SK-N-SH (cell line): ENCODE measurements at regions of chr10 and their contacts with region 1.

Region 1: GRCh38 chr10:132654702-132655661 is 117.4 kb downstream of the INPP5A start:
- DNase-seq: peak; percentile 95
- H3K4me3 ChIP-seq: peak overlapping the region in 1 of 2 experiments; percentile 53; a peak in 1 of 4 replicates
- H3K27ac ChIP-seq: no peak overlapping the region
- H3K4me1 ChIP-seq: peaks cover 0 to 31% of the 10 kb centered on the region in 2 experiments; a peak in 1 of 4 replicates
- H3K27me3 ChIP-seq: no peaks in the 10 kb centered on the region
- CTCF ChIP-seq: peak; percentile 97
- EP300 ChIP-seq: no peak
- RAD21 ChIP-seq: peak; percentile 94

Region 2: GRCh38 chr10:132434405-132435005 is 220.5 kb before region 1 on chr10:
- CTCF ChIA-PET with region 1: no interaction called
- POLR2A ChIA-PET with region 1: no interaction called
- DNase-seq: peak; percentile 39
- H3K4me3 ChIP-seq: no peak overlapping the region
- H3K27ac ChIP-seq: no peak overlapping the region
- H3K4me1 ChIP-seq: peaks cover 0 to 16% of the 10 kb centered on the region in 2 experiments; a peak in 1 of 4 replicates
- H3K27me3 ChIP-seq: no peaks in the 10 kb centered on the region
- CTCF ChIP-seq: no peak
- EP300 ChIP-seq: no peak
- RAD21 ChIP-seq: no peak

Region 3: DNA sequence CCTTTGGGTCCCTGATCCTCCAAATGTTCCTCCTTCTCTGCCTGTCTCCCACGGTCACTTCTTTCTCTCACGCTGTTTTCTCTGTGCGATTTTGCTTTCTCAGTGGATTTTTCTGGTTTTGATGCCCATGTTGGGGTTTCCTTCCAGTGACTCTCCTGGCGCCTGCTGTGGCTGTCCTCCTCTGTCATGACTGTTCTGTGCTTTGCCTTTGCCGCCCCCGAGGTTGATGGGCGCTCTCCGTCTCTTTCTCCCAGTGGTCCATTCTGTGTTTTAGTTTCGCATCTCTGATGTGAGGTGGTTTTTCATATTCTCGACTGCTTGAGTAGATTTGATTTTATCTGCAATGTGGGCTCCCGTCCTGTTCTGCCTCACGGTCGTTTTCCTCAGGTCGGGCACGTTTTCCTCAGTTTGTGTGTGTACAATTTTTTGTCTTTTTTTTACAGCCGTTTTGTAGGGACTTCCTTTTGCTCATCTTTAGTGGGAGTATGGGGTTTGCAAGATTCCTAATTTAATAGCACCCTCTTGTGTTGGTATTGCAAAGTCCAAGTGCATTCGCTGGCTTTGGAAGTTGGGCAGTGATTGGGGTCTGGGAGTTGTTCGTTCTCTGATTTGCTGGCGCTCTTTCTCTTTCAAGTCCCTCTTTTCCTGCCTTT is 17.4 kb before region 1 on chr10:
- CTCF ChIA-PET with region 1: interaction called, 19 read pairs
- POLR2A ChIA-PET with region 1: no interaction called
- DNase-seq: peak; percentile 89
- H3K4me3 ChIP-seq: peak overlapping the region in 1 of 2 experiments; percentile 18; a peak in 2 of 4 replicates
- H3K27ac ChIP-seq: no peak overlapping the region
- H3K4me1 ChIP-seq: peaks cover 0 to 7% of the 10 kb centered on the region in 2 experiments; a peak in 1 of 4 replicates
- H3K27me3 ChIP-seq: no peaks in the 10 kb centered on the region
- CTCF ChIP-seq: peak; percentile 83
- EP300 ChIP-seq: no peak
- RAD21 ChIP-seq: peak; percentile 97

Region 4: GRCh38 chr10:132665946-132666704 is 11.1 kb after region 1 on chr10:
- CTCF ChIA-PET with region 1: interaction called, 28 read pairs
- POLR2A ChIA-PET with region 1: no interaction called
- DNase-seq: no peak
- H3K4me3 ChIP-seq: peak overlapping the region in 1 of 2 experiments; percentile 5; a peak in 1 of 4 replicates
- H3K27ac ChIP-seq: peak overlapping the region; percentile 67 to 81; a peak in 3 of 4 replicates
- H3K4me1 ChIP-seq: peaks cover 20 to 22% of the 10 kb centered on the region in 2 experiments
- H3K27me3 ChIP-seq: no peaks in the 10 kb centered on the region
- CTCF ChIP-seq: no peak
- EP300 ChIP-seq: peak in 1 of 2 experiments; percentile 15; a peak in 1 of 4 replicates
- RAD21 ChIP-seq: no peak

Region 5: DNA sequence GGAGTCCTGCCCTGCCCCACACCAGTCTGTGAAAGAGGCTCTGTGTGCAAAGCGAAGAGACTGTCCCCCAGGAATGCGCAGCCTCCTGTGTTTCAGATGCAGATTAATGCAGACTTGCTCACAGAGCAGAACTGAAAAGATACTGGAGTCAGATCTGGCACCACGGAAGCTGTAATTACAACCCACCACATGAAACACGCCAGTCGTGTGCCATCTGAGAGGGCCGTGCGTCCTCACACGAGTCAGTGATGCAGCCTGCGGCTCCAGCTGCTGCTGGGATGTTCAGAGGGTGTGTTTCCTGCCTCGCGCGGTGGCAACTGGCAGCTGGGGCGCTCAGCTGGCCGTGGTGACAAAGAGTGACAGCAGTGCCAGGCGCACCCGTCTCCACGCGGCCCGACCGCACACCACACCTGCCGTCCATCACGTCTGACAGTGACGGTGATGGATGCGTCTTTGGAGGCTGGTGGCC is 81.0 kb after region 1 on chr10:
- CTCF ChIA-PET with region 1: interaction called, 42 read pairs
- POLR2A ChIA-PET with region 1: no interaction called
- DNase-seq: peak; percentile 63
- H3K4me3 ChIP-seq: no peak overlapping the region
- H3K27ac ChIP-seq: peak overlapping the region in 1 of 2 experiments; percentile 70; a peak in 2 of 4 replicates
- H3K4me1 ChIP-seq: peaks cover 0 to 30% of the 10 kb centered on the region in 2 experiments; a peak in 1 of 4 replicates
- H3K27me3 ChIP-seq: no peaks in the 10 kb centered on the region
- CTCF ChIP-seq: no peak
- EP300 ChIP-seq: no peak
- RAD21 ChIP-seq: no peak

Region 6: GRCh38 chr10:132793871-132794849 is 139.2 kb after region 1 on chr10:
- CTCF ChIA-PET with region 1: interaction called, 42 read pairs
- POLR2A ChIA-PET with region 1: no interaction called
- DNase-seq: peak; percentile 75
- H3K4me3 ChIP-seq: 0 out of 4 replicates have a peak overlapping the region, but pooled peaks of 1 of the 2 experiments have one; percentile 9
- H3K27ac ChIP-seq: no peak overlapping the region
- H3K4me1 ChIP-seq: peaks cover 0 to 16% of the 10 kb centered on the region in 2 experiments; a peak in 1 of 4 replicates
- H3K27me3 ChIP-seq: peaks cover 31% of the 10 kb centered on the region
- CTCF ChIP-seq: peak; percentile 43
- EP300 ChIP-seq: no peak
- RAD21 ChIP-seq: no peak; the same call in 1 of the 2 replicates

Region 7: DNA sequence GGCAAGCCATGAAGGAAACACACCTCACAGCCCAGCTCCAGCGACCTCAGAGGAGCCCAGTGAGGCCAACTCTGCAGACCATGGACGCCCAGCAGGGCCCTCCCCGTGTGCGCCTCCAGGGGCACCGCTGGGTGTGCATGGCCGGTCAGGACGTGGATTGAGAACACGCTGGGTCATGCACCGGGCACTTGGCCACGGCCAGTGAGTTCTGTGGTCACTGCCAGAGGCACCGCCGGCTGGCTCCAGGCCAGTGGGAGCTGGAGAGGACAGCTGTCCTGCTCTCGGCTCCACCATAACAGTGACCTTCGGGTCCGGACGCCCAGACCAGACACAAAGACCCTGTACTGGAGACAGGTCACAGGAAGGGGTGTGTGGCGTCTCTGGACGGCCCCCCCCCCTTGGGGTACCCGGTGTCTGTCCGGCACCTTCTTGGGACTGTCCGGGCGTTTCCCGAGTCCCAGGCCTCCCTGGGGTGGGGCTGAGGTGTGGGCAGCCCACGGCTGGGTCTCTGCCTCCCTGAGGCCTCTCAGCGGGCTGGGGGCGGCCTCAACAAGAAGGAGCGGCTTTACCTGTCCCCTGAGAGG is 181.4 kb after region 1 on chr10:
- CTCF ChIA-PET with region 1: interaction called, 26 read pairs
- POLR2A ChIA-PET with region 1: no interaction called
- DNase-seq: peak; percentile 74
- H3K4me3 ChIP-seq: no peak overlapping the region; a peak in 1 of 4 replicates
- H3K27ac ChIP-seq: no peak overlapping the region
- H3K4me1 ChIP-seq: peaks cover 0 to 11% of the 10 kb centered on the region in 2 experiments; a peak in 1 of 4 replicates
- H3K27me3 ChIP-seq: no peaks in the 10 kb centered on the region; the same call in 1 of the 2 replicates
- CTCF ChIP-seq: no peak
- EP300 ChIP-seq: no peak
- RAD21 ChIP-seq: no peak

Region 8: GRCh38 chr10:132904181-132904819 is 249.3 kb after region 1 on chr10:
- CTCF ChIA-PET with region 1: interaction called, 19 read pairs
- POLR2A ChIA-PET with region 1: no interaction called
- DNase-seq: peak; percentile 90
- H3K4me3 ChIP-seq: no peak overlapping the region
- H3K27ac ChIP-seq: no peak overlapping the region
- H3K4me1 ChIP-seq: no peaks in the 10 kb centered on the region
- H3K27me3 ChIP-seq: no peaks in the 10 kb centered on the region; the same call in 1 of the 2 replicates
- CTCF ChIP-seq: peak; percentile 72
- EP300 ChIP-seq: no peak
- RAD21 ChIP-seq: peak; percentile 82